ENCODE measurements at regions of chr4 and their contacts with region 1.

Region 1: DNA sequence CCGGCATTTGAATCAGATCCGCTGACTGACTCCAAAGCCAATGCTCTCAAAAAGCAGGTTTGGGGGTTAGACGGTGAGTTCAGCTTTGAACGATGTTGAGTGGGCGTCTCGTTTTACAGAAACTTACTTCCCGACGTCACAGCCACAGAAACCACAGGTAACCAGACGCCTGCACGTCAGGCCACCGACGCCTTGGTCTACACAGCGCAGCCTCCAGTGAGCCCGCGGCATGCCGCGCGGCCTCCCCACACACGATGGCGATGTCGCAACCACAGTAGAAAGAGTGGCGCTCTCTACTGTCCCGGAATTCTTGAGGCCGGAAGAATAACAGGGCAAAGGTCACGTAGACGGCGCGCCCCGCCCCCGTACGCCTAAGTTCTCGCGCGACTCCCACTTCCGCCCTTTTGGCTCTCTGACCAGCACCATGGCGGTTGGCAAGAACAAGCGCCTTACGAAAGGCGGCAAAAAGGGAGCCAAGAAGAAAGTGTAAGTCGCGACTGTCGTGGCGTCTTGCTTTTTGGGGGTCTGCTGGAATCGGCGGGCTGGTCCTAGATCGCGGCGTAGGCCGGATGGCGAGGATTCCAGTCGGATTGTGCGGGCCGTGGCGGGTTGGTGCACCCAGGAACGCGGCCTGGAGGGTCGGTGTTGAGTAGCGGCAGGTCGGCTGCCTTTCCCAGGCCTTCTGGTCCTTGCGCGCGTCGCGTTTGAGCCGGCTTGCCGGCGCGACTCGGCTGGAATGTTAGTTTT is at the start of gene RPS3A:
- DNase-seq: peak; percentile 97
- H3K4me3 Mint-ChIP-seq: peak within 1 kb of the TSS; percentile 96
- H3K27ac Mint-ChIP-seq: peak within 1 kb of the TSS; percentile 100
- H3K4me1 Mint-ChIP-seq: peaks cover 37% of the 10 kb centered on the region
- H3K27me3 Mint-ChIP-seq: peaks cover 4% of the 10 kb centered on the region
- total RNA-seq, gene RPS3A: 3,793 to 3,917 TPM

Region 2: DNA sequence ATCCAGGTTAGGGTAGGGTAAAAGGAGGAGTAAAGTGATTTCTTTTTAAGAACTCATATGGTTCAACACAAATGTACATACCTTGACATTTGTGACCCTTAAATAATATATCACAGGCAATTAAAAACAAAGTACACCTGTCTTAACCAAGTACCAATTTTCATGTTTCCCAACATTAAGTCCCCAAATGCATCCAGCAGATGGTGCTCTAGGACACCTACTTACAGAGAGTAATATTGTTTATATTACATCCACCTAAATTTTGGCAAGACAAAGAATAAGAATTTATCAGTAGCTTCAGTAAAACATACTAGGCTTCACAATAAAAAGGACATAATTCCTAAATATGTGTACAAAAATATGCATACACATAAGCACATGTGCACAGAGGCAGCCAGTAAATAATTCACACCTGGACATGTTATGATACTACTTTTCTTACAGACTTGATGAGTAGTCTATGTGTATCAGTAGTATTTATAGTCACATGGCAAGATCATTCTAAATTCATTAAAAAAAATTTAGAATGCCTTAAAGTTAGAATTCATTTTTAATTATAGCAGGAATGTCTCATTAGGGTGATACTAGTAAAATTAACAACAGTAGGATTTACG is 801.4 kb before region 1 on chr4:
- CTCF ChIA-PET with region 1: no interaction called
- intact Hi-C with region 1: loop called (anchors 2 kb)
- DNase-seq: peak; percentile 68
- H3K4me3 Mint-ChIP-seq: no peak overlapping the region
- H3K27ac Mint-ChIP-seq: no peak overlapping the region
- H3K4me1 Mint-ChIP-seq: peaks cover 14% of the 10 kb centered on the region
- H3K27me3 Mint-ChIP-seq: no peaks in the 10 kb centered on the region

Region 3: DNA sequence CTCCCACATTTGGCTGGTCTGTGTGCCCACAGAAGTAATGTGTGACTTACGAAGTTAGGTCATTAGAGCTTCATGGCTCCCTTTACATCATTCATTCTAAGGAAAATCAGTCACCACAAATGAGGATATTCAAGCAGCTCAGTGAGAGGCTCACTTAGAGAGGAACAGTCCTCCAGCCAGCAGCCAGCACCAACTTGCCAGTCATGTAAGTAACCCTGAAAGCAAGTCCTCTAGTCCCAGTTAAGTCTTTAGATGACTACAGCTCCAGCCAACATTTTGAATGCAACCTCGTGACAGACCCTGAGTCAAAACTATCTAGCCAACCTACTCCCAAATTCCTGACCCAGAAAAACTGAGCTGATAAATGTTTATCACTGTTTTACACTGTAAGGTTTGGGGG is 155.6 kb before region 1 on chr4:
- CTCF ChIA-PET with region 1: no interaction called
- intact Hi-C with region 1: no loop called
- DNase-seq: no peak
- H3K4me3 Mint-ChIP-seq: no peak overlapping the region
- H3K27ac Mint-ChIP-seq: no peak overlapping the region
- H3K4me1 Mint-ChIP-seq: peaks cover 57% of the 10 kb centered on the region
- H3K27me3 Mint-ChIP-seq: no peaks in the 10 kb centered on the region

Region 4: GRCh38 chr4:150960818-150961217 is 138.6 kb before region 1 on chr4:
- CTCF ChIA-PET with region 1: interaction called, 3 read pairs
- intact Hi-C with region 1: loop called (anchors 1 kb)
- DNase-seq: peak; percentile 68
- H3K4me3 Mint-ChIP-seq: no peak overlapping the region
- H3K27ac Mint-ChIP-seq: no peak overlapping the region
- H3K4me1 Mint-ChIP-seq: peaks cover 57% of the 10 kb centered on the region
- H3K27me3 Mint-ChIP-seq: no peaks in the 10 kb centered on the region

Region 5: GRCh38 chr4:151117371-151117962 is 18.1 kb after region 1 on chr4:
- CTCF ChIA-PET with region 1: interaction called, 11 read pairs
- intact Hi-C with region 1: no loop called
- DNase-seq: peak; percentile 77
- H3K4me3 Mint-ChIP-seq: no peak overlapping the region
- H3K27ac Mint-ChIP-seq: no peak overlapping the region
- H3K4me1 Mint-ChIP-seq: peaks cover 3% of the 10 kb centered on the region
- H3K27me3 Mint-ChIP-seq: no peaks in the 10 kb centered on the region

Region 6: DNA sequence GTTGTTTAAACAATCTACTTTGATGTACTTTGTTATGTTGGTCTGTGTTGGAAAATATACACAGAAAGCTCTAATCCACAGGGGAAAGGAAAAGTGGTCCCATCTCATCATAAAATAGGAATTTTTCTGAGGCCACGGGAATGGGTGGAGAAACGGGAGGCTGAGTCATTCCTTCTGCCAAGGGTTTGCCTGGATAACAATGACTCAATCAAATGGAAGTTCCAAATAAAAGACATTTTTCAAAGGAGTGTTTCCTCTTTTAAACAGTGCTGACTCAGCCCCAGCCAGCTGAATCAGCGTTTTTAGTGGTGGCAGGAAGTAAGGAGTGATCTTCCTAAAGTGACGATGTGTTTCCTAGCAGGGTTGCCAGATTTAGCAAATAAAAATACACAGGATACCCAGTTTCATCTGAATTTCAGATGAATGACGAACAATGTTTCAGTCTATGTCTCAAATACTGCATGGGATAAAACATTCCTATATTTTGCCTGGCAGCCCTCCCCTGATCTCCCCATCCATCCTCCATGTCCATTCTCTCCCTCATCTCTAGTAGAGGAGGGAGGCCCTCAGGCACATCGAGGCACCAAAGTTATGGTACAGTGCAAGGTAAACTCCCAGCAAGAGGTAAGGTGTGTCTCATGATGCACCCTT is 1006.8 kb after region 1 on chr4:
- CTCF ChIA-PET with region 1: no interaction called
- intact Hi-C with region 1: loop called (anchors 10 kb)
- DNase-seq: peak; percentile 61
- H3K4me3 Mint-ChIP-seq: no peak overlapping the region
- H3K27ac Mint-ChIP-seq: no peak overlapping the region
- H3K4me1 Mint-ChIP-seq: peaks cover 84% of the 10 kb centered on the region
- H3K27me3 Mint-ChIP-seq: no peaks in the 10 kb centered on the region

Region 7: GRCh38 chr4:152779513-152780266 is 1680.3 kb after region 1 on chr4 and contains the starts of genes ARFIP1 and TIGD4:
- CTCF ChIA-PET with region 1: no interaction called
- intact Hi-C with region 1: loop called (anchors 10 kb)
- DNase-seq: peak; percentile 97
- H3K4me3 Mint-ChIP-seq: peak within 1 kb of the TSS; percentile 91
- H3K27ac Mint-ChIP-seq: peak within 1 kb of the TSS; percentile 75
- H3K4me1 Mint-ChIP-seq: peaks cover 23% of the 10 kb centered on the region
- H3K27me3 Mint-ChIP-seq: peaks cover 4% of the 10 kb centered on the region
- total RNA-seq, gene ARFIP1: 5.0 to 5.1 TPM
- total RNA-seq, gene TIGD4: 0.07 to 0.27 TPM